ENCODE measurements at regions of chr2 and their contacts with region 1.

Region 1: GRCh38 chr2:207974216-207974605 is 51.1 kb downstream of the PLEKHM3 start:
- DNase-seq: no peak
- H3K4me3 ChIP-seq: no peak overlapping the region
- H3K27ac ChIP-seq: no peak overlapping the region
- H3K4me1 ChIP-seq: peaks cover 0 to 32% (median 20%) of the 10 kb centered on the region in 4 donors
- H3K27me3 ChIP-seq: no peaks in the 10 kb centered on the region
- CTCF ChIP-seq: no peak
- EP300 ChIP-seq: no peak
- POLR2A ChIP-seq: no peak

Region 2: GRCh38 chr2:207746131-207746530 is 228.1 kb before region 1 on chr2:
- intact Hi-C with region 1: loop called (anchors 5 kb)
- DNase-seq: no peak
- H3K4me3 ChIP-seq: no peak overlapping the region
- H3K27ac ChIP-seq: no peak overlapping the region
- H3K4me1 ChIP-seq: peaks cover 0 to 4% (median 0%) of the 10 kb centered on the region in 4 donors
- H3K27me3 ChIP-seq: no peaks in the 10 kb centered on the region
- CTCF ChIP-seq: peak; percentile 69 to 87 (median 80)
- EP300 ChIP-seq: no peak
- POLR2A ChIP-seq: no peak

Region 3: DNA sequence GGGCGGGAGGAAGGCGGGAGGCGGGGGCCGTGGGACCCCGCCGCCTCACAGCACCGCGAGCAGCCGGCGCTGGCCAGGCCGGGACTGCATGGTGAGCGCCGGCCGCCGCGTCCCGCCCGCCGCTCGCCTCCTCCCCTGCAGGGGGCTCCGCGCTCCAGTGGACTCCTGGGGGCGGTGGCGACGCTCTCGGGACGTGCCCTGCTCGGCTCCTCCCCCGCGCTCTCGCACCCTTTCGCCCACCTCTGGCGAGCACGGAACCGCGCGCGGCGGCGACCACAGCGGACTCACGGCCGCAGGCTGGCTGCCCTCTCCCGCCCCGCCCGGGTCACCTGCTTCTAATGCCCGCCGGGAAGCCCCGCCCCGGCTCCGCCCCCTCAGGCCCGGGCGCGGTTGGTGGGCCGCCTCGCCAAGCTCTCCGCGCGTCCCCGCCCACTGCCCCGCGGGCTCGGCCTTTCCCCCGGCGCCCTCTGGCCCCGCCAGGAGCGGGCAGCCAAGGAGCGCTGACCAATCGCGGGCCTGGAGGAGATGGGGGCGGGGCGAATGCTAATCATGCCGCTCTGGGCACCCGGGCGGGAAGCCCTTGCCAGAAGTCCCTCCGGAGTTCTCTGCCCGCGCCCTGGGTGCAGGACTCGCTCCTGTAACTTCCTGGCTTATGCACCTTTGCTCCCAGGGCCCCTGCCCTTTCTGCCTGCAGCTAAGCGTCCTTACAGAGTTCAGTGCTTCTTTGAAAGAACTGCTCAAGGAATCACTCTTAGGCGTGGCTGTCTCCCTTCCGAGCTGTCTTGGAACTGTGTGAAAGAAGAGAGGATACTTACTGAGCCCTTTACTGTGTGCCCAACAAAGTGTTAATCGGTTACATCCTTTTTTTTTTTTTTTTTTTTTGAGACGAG is 204.4 kb before region 1 on chr2 and contains the start of gene FZD5:
- intact Hi-C with region 1: loop called (anchors 1 kb)
- DNase-seq: peak; percentile 97
- H3K4me3 ChIP-seq: peak within 1 kb of the TSS; percentile 75 to 98 (median 86)
- H3K27ac ChIP-seq: peak within 1 kb of the TSS; percentile 81 to 97 (median 92)
- H3K4me1 ChIP-seq: peaks cover 0 to 45% (median 40%) of the 10 kb centered on the region in 4 donors
- H3K27me3 ChIP-seq: no peaks in the 10 kb centered on the region
- CTCF ChIP-seq: peak in 3 of 4 experiments; percentile 22 to 71 (median 28)
- EP300 ChIP-seq: peak in 1 of 4 donors; percentile 35
- POLR2A ChIP-seq: peak in 1 of 2 donors; percentile 70
- total RNA-seq, gene FZD5: 29.3 to 52.0 (median 37.4) TPM

Region 4: DNA sequence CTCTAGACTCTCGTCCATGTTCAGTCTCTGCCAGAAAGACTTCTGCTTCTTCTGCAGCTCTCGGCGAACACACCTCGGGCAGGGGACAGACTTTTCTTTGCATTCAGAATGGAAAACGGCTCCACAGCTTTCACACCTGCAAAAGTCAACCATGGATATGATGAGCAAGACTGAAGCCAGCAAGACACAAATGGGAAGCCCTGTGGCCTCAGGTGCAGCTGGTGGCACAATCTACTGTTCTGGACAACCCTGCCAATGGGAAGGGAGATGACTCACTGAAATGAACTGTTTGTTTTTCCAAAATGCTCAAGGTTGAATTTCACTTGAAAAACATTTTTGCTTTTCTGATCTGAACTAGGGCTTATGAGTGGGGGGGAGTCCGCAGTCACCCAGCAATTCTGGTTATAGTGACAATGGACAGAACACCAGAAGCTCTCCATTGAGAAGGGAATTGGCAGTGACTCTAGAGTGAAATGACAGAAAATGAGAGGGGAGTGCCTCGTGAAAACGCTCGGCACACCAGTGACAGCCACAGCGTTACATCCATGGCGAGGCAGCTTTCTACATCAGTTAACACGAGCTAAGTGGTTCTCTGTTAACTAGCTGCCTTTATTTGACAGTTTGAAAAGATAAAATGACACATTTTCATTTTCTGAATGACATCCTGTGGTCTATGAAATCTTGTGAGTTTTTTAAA is 145.7 kb before region 1 on chr2:
- intact Hi-C with region 1: loop called (anchors 5 kb)
- DNase-seq: no peak
- H3K4me3 ChIP-seq: no peak overlapping the region
- H3K27ac ChIP-seq: peak overlapping the region in 3 of 4 donors; percentile 81 to 89 (median 81)
- H3K4me1 ChIP-seq: peaks cover 3 to 57% (median 56%) of the 10 kb centered on the region in 4 donors
- H3K27me3 ChIP-seq: no peaks in the 10 kb centered on the region
- CTCF ChIP-seq: no peak
- EP300 ChIP-seq: no peak
- POLR2A ChIP-seq: no peak

Region 5: DNA sequence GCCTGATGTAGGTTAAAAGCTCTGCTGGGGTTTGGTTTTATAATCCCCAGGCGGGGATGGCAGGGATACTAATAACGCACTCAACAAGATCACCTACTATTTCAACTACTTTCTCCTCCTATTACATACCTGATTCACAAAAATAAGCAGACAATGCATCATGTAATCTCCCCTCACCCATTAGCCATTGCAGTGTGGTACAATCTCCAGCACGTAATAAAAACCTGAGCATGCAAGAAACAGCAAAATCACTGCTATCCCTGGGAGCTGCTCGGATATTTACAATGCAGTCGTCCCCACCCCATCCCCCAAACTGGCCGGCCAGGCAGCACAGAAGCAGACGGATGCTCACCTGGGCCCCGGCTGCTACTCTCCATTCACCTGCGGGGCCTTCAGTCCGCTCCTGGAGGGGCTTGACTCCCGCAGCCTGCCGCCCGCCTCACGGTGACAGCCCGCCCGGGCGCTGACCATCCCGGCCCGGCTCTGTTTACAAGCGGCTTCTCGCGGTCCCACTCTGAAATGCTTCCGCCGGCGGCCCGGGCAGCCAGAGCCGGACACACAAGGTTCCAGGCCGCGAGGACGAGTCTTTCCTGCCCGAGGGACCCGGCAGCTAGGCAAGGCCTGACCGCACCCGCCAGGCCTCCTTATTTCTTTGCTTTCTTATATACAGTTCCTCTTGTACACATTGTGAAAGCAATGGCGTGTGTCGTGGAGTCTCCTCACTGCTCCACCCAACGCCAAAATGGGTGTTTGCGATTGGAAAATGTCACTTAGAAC is 51.0 kb after region 1 on chr2 and contains the start of gene PLEKHM3:
- intact Hi-C with region 1: loop called (anchors 5 kb)
- DNase-seq: peak; percentile 94
- H3K4me3 ChIP-seq: peak within 1 kb of the TSS; percentile 67 to 80 (median 72)
- H3K27ac ChIP-seq: peak within 1 kb of the TSS; percentile 75 to 83 (median 80)
- H3K4me1 ChIP-seq: peaks cover 0 to 29% (median 17%) of the 10 kb centered on the region in 4 donors
- H3K27me3 ChIP-seq: no peaks in the 10 kb centered on the region
- CTCF ChIP-seq: no peak
- EP300 ChIP-seq: no peak
- POLR2A ChIP-seq: peak in 1 of 2 donors; percentile 15
- total RNA-seq, gene PLEKHM3: 29.1 to 47.9 (median 33.8) TPM

Measured in sigmoid colon (tissue), 7 donors.